ENCODE measurements at regions of chr6 and their contacts with region 1.

Region 1: DNA sequence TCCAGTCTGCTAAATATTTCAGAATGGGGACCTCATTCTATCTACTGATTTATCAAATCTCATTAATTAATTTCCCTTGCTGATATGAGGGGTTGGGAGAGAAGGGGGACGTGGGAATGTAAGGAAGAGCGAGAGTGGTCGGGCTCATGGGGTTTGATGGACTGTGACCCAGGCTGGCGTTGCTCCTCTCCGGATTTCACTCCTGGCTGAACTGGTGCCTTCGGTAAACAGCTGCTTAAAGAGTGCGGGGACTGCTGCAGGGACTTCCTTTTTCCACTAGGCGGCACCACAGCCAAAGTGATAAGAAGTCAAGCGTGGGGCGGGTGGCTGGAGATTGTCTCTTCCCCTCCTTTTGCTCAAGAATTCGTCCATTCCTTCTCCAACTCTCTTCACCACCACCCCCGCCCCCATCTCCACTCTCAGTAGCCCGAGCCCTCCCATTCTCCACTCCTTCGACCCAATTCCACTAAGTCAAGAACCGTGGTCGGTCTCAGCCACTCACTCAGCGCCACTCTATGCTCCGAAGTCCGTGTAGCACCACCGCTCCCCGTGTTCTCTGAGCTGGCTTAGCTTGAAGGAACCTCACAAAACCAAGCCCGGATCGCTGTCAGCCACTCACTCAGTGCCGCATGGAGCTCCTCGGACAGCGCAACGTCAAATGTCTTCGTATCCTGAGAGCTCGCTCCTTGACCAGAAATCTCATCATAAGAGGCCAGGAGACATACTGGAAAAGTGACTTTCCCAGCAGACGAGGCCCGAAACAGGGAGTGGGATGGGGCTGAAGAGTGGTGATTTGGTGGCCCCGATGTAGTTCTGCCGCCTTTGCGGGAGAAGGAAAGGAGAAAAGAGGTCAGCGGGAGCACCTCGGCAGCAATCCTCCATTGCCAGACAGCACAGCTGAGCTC is 9.7 kb downstream of the TRIM31 start:
- DNase-seq: peak; percentile 90
- ATAC-seq: peak; percentile 79
- H3K4me3 Mint-ChIP-seq: peak overlapping the region; percentile 73
- H3K27ac Mint-ChIP-seq: peak overlapping the region; percentile 65
- H3K4me1 Mint-ChIP-seq: peaks cover 36% of the 10 kb centered on the region
- H3K27me3 Mint-ChIP-seq: peaks cover 47% of the 10 kb centered on the region

Region 2: GRCh38 chr6:29752451-29753308 is 350.5 kb before region 1 on chr6:
- CTCF ChIA-PET with region 1: no interaction called
- POLR2A ChIA-PET with region 1: no interaction called
- intact Hi-C with region 1: no loop called
- DNase-seq: peak; percentile 93
- ATAC-seq: peak; percentile 80
- H3K4me3 Mint-ChIP-seq: peak overlapping the region; percentile 83
- H3K27ac Mint-ChIP-seq: peak overlapping the region; percentile 89
- H3K4me1 Mint-ChIP-seq: peaks cover 23% of the 10 kb centered on the region
- H3K27me3 Mint-ChIP-seq: no peaks in the 10 kb centered on the region

Region 3: GRCh38 chr6:29942275-29943052 is 160.8 kb before region 1 on chr6 and contains the start of gene HLA-A:
- CTCF ChIA-PET with region 1: no interaction called
- POLR2A ChIA-PET with region 1: no interaction called
- intact Hi-C with region 1: no loop called
- DNase-seq: peak; percentile 96
- ATAC-seq: peak; percentile 91
- H3K4me3 Mint-ChIP-seq: peak within 1 kb of the TSS; percentile 88
- H3K27ac Mint-ChIP-seq: peak within 1 kb of the TSS; percentile 100
- H3K4me1 Mint-ChIP-seq: peaks cover 58% of the 10 kb centered on the region
- H3K27me3 Mint-ChIP-seq: no peaks in the 10 kb centered on the region
- total RNA-seq, gene HLA-A: 1,053 to 1,189 TPM

Region 4: GRCh38 chr6:30116724-30117123 is 13.5 kb after region 1 on chr6:
- CTCF ChIA-PET with region 1: interaction called, 12 read pairs
- POLR2A ChIA-PET with region 1: no interaction called
- intact Hi-C with region 1: no loop called
- DNase-seq: no peak
- ATAC-seq: no peak
- H3K4me3 Mint-ChIP-seq: no peak overlapping the region
- H3K27ac Mint-ChIP-seq: no peak overlapping the region
- H3K4me1 Mint-ChIP-seq: peaks cover 12% of the 10 kb centered on the region
- H3K27me3 Mint-ChIP-seq: peaks cover 18% of the 10 kb centered on the region

Region 5: DNA sequence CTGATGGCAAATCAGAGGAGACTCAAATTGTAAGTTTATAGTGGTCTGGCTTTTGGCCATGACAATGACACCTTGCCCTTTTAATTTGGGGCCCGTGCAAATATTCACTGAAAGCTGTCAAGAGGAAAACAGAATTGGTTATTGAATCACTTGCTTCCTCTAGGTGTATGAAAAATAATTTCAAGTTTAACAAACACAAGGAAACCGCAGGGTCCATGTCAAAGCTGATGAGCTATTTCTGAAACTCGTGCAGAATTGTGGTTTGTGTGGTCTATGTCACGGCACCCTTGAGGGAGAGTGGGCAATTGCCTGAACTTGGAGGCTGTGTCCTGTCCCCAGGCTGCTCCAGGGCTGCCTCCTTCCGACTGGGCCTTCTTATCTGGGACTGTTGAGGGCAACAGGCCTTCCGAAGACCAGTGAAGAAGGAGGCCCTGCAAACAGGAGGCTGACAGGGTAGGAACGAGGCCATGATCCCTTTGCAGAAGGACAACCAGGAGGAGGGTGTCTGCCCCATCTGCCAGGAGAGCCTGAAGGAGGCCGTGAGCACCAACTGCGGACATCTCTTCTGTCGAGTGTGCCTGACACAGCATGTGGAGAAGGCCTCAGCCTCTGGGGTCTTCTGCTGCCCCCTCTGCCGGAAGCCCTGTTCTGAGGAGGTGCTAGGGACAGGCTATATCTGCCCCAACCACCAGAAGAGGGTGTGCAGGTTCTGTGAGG is 33.5 kb after region 1 on chr6:
- CTCF ChIA-PET with region 1: interaction called, 244 read pairs
- POLR2A ChIA-PET with region 1: interaction called, 3 read pairs
- intact Hi-C with region 1: loop called (anchors 1 kb)
- DNase-seq: peak; percentile 18
- ATAC-seq: peak; percentile 47
- H3K4me3 Mint-ChIP-seq: no peak overlapping the region
- H3K27ac Mint-ChIP-seq: no peak overlapping the region
- H3K4me1 Mint-ChIP-seq: peaks cover 6% of the 10 kb centered on the region
- H3K27me3 Mint-ChIP-seq: peaks cover 40% of the 10 kb centered on the region

Region 6: DNA sequence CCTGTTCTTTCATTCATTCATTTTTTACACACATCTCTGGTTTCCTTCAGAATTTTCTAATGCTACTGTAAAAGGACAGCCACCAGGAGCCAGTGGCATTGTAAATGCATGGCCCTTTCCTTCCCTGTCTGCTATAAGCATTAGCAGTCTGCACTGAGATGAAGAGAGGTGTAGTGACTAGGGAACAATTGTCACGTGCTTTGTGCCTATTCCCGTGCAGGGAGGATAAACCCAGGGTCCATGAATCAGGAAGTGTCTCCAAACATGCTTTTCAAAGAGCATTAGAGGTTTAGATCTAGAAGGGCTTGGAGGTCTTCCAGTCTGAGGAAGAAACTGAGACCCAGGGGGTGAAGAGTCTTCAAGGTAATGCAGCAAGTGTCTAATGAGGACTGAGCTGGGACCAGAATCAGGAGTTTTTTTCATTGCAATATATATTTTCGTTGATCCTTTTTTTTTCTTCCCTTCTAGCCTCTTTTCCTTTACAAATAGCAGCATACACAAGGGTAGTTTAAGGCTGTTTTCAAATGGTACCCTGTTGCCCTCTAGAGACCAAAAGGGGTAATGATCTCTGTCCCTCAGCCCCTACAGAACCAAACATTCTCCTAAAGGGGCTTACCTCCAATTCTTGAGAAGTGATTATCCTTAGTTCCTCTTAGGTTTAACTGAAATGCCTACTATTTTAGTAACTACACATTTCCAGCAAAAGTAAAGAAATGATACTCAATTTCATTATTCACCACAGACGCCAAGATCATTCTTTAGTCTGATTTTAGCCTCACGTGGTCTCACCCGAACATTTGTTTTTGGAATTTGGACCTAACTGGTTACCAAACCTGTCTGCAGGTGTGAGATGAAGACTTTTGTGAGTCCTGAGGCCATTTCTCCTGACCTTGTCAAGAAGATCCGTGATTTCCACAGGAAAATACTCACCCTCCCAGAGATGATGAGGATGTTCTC is 66.7 kb after region 1 on chr6:
- CTCF ChIA-PET with region 1: interaction called, 40 read pairs
- POLR2A ChIA-PET with region 1: no interaction called
- intact Hi-C with region 1: loop called (anchors 1 kb)
- DNase-seq: peak; percentile 16
- ATAC-seq: peak; percentile 83
- H3K4me3 Mint-ChIP-seq: no peak overlapping the region
- H3K27ac Mint-ChIP-seq: no peak overlapping the region
- H3K4me1 Mint-ChIP-seq: peaks cover 12% of the 10 kb centered on the region
- H3K27me3 Mint-ChIP-seq: peaks cover 38% of the 10 kb centered on the region

Region 7: GRCh38 chr6:30319146-30319835 is 216.1 kb after region 1 on chr6:
- CTCF ChIA-PET with region 1: no interaction called
- POLR2A ChIA-PET with region 1: no interaction called
- intact Hi-C with region 1: no loop called
- DNase-seq: no peak
- ATAC-seq: no peak
- H3K4me3 Mint-ChIP-seq: no peak overlapping the region
- H3K27ac Mint-ChIP-seq: peak overlapping the region; percentile 61
- H3K4me1 Mint-ChIP-seq: peaks cover 70% of the 10 kb centered on the region
- H3K27me3 Mint-ChIP-seq: no peaks in the 10 kb centered on the region